Activated CD8-positive, alpha-beta T cell treated with anti-CD3 and anti-CD28 coated beads, Interleukin-2, amount 10 ng/mL, durations not matched to agents 7 days and 5 days (primary cell): ENCODE measurements at regions of chr12 and their contacts with region 1.

Region 1: DNA sequence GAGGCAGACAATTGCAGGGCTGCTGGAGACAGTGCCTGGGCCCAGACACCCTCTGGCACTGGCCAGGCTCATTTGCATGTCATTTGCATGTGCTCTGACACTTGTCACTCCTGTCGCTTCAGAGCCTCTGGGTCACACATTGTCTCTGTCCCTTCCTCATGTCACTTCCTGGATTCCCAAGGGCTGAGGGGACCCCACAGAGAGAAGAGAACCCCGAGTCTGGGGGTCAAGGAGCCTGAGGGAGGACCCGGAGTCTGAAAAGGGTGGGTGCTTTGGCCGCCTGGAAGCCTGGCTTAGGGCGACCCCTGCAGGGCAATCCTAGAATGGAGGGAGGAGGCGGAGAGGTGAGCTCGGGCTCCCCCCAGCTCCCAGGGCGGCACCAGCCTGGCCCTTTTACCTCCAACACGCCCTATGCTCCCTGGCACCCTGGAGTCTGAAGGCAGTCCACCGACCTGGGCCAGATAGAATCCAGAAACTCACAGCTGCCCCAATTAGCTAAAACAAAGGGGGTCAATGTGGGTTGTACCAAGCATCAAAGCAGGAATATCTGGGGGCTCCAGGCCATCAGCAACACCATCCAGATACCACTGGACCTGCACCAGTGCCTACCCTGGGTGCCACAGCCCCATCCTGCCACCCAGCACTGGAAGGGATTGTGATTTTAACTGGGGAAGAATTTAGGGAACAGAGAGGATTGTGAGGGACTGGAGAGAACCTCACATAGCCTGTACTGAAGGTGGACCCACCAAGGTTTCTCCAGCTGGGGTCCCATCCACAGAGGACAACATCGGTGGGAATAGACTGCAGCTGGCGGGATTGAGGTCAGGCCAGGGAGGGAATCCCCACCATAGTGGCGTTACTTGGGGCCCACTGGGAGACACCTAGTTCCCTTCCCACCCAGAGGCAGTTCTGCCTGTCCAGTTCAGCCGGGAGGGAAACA is 21.8 kb upstream of the KRT78 start:
- DNase-seq: peak; percentile 85
- ATAC-seq: peak; percentile 60
- H3K4me3 Mint-ChIP-seq: no peak overlapping the region
- H3K27ac Mint-ChIP-seq: no peak overlapping the region
- H3K4me1 Mint-ChIP-seq: peaks cover 36% of the 10 kb centered on the region
- H3K27me3 Mint-ChIP-seq: peaks cover 6% of the 10 kb centered on the region

Region 2: GRCh38 chr12:52372216-52373154 is 498.1 kb before region 1 on chr12:
- CTCF ChIA-PET with region 1: interaction called, 12 read pairs
- POLR2A ChIA-PET with region 1: interaction called, 4 read pairs
- DNase-seq: peak; percentile 76
- ATAC-seq: peak; percentile 72
- H3K4me3 Mint-ChIP-seq: no peak overlapping the region
- H3K27ac Mint-ChIP-seq: no peak overlapping the region
- H3K4me1 Mint-ChIP-seq: no peaks in the 10 kb centered on the region
- H3K27me3 Mint-ChIP-seq: peaks cover 35% of the 10 kb centered on the region

Region 3: DNA sequence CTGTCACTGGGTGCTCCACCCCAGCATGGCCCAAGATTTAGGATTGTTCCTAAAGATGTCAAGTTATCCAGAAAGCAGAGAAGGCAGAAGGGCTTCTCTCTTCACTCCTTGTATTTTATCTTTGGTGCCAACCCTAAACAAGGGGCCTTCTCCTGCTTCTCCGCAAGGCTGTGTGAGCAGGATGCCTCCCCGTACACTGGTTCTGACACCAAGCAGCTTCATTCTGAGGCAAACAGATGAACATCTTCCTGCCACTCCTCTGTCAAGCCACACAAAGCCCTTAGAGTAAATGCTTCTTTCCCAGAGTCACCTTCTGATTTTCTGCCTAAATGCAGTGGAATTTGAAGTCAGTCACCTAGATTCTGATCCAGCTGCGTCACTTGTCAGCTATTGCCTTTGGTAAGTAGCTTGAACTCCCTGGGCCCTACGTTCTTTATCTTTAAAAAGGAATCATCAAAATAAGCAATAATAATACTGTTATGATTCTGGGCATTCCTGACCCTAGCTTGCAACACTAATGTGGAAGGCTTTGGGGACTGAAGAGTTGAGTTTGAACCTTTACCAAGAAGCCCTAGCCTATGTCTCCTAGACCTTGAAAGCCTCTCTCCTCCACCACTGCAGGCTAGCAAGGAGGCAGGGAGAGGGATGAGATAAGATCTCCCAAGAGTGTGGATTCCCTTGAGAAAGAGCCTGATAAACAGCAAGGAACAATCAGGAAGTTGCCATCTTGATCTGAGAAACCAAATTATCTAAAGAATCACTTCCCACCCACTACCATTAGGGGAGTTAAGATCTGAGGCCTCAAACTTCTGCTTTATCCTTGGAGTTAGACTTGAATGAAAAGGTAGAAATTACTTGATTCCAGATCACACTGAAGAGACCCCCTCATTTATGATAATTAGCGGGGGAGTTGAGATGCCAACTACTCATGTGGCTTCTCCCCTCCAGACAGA is 257.9 kb before region 1 on chr12:
- CTCF ChIA-PET with region 1: interaction called, 11 read pairs
- POLR2A ChIA-PET with region 1: no interaction called
- DNase-seq: no peak
- ATAC-seq: no peak
- H3K4me3 Mint-ChIP-seq: no peak overlapping the region
- H3K27ac Mint-ChIP-seq: peak overlapping the region; percentile 58
- H3K4me1 Mint-ChIP-seq: peaks cover 75% of the 10 kb centered on the region
- H3K27me3 Mint-ChIP-seq: peaks cover 6% of the 10 kb centered on the region

Region 4: GRCh38 chr12:52813885-52814711 is 56.5 kb before region 1 on chr12 and contains the start of gene KRT4:
- CTCF ChIA-PET with region 1: interaction called, 10 read pairs
- POLR2A ChIA-PET with region 1: interaction called, 3 read pairs
- DNase-seq: no peak
- ATAC-seq: no peak
- H3K4me3 Mint-ChIP-seq: no peak within 1 kb of the TSS
- H3K27ac Mint-ChIP-seq: no peak within 1 kb of the TSS
- H3K4me1 Mint-ChIP-seq: peaks cover 15% of the 10 kb centered on the region
- H3K27me3 Mint-ChIP-seq: peaks cover 2% of the 10 kb centered on the region
- total RNA-seq, gene KRT4: not detected